Panc1 (cell line): ENCODE measurements at regions of chr22 and their contacts with region 1.

Region 1: DNA sequence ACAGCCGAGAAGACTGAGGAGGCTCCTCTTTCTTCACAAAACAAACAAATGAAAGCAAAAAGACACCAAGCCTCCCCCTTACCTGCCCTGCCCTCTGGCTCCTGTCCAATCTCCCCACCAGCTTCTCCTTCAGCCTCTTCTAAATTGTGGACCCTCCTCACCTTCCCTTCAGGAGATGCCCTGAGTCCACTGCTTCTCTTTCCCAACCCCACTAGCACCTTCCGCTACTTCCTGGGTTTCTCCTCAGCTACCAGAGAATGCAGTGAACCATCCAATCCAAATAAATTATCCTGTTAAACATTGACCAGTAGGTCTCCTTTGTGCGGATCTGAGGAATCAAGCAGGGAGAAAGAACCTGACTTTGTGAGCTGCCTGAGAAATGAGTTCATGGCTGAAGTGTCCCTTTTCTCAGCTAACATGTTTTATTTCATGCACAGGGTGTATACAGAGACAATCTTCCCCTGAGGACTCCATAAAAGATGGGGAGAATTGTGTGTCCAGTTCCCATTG is 63.2 kb upstream of the VPREB1 start:
- DNase-seq: no peak
- ATAC-seq: no peak
- H3K4me3 ChIP-seq: no peak overlapping the region
- H3K27ac ChIP-seq: no peak overlapping the region
- H3K4me1 ChIP-seq: no peaks in the 10 kb centered on the region
- H3K27me3 ChIP-seq: no peaks in the 10 kb centered on the region
- CTCF ChIP-seq: no peak

Region 2: GRCh38 chr22:21754523-21754922 is 426.9 kb before region 1 on chr22:
- CTCF ChIA-PET with region 1: no interaction called
- POLR2A ChIA-PET with region 1: no interaction called
- in situ Hi-C with region 1: no loop called
- intact Hi-C with region 1: no loop called
- DNase-seq: no peak
- ATAC-seq: no peak
- H3K4me3 ChIP-seq: no peak overlapping the region
- H3K27ac ChIP-seq: no peak overlapping the region
- H3K4me1 ChIP-seq: no peaks in the 10 kb centered on the region
- H3K27me3 ChIP-seq: no peaks in the 10 kb centered on the region
- CTCF ChIP-seq: no peak

Region 3: GRCh38 chr22:22045571-22046335 is 135.6 kb before region 1 on chr22:
- CTCF ChIA-PET with region 1: no interaction called
- POLR2A ChIA-PET with region 1: no interaction called
- in situ Hi-C with region 1: no loop called
- intact Hi-C with region 1: no loop called
- DNase-seq: no peak
- ATAC-seq: no peak
- H3K4me3 ChIP-seq: no peak overlapping the region
- H3K27ac ChIP-seq: no peak overlapping the region
- H3K4me1 ChIP-seq: no peaks in the 10 kb centered on the region
- H3K27me3 ChIP-seq: no peaks in the 10 kb centered on the region
- CTCF ChIP-seq: no peak

Region 4: GRCh38 chr22:22248878-22249277 is 67.5 kb after region 1 on chr22:
- CTCF ChIA-PET with region 1: no interaction called
- POLR2A ChIA-PET with region 1: no interaction called
- in situ Hi-C with region 1: no loop called
- intact Hi-C with region 1: loop called (anchors 10 kb)
- DNase-seq: no peak
- ATAC-seq: no peak
- H3K4me3 ChIP-seq: no peak overlapping the region
- H3K27ac ChIP-seq: no peak overlapping the region
- H3K4me1 ChIP-seq: no peaks in the 10 kb centered on the region
- H3K27me3 ChIP-seq: no peaks in the 10 kb centered on the region
- CTCF ChIP-seq: no peak